CD8-positive, alpha-beta T cell (primary cell): ENCODE measurements at regions of chr1 and their contacts with region 1.

Region 1: GRCh38 chr1:219010720-219011119 is 163.0 kb upstream of the LYPLAL1 start:
- DNase-seq: no peak
- ATAC-seq: no peak
- H3K4me3 ChIP-seq: no peak overlapping the region
- H3K4me3 Mint-ChIP-seq: no peak overlapping the region
- H3K27ac ChIP-seq: no peak overlapping the region
- H3K27ac Mint-ChIP-seq: no peak overlapping the region
- H3K4me1 ChIP-seq: no peaks in the 10 kb centered on the region
- H3K4me1 Mint-ChIP-seq: no peaks in the 10 kb centered on the region
- H3K27me3 ChIP-seq: no peaks in the 10 kb centered on the region
- H3K27me3 Mint-ChIP-seq: peaks cover 2% of the 10 kb centered on the region
- CTCF ChIP-seq: no peak

Region 2: GRCh38 chr1:218546309-218546708 is 464.4 kb before region 1 on chr1:
- CTCF ChIA-PET with region 1: no interaction called
- POLR2A ChIA-PET with region 1: no interaction called
- intact Hi-C with region 1: loop called in 1 of 2 experiments (anchors 5 kb)
- DNase-seq: no peak
- ATAC-seq: no peak
- H3K4me3 ChIP-seq: no peak overlapping the region
- H3K4me3 Mint-ChIP-seq: no peak overlapping the region
- H3K27ac ChIP-seq: no peak overlapping the region
- H3K27ac Mint-ChIP-seq: no peak overlapping the region
- H3K4me1 ChIP-seq: no peaks in the 10 kb centered on the region
- H3K4me1 Mint-ChIP-seq: no peaks in the 10 kb centered on the region
- H3K27me3 ChIP-seq: no peaks in the 10 kb centered on the region
- H3K27me3 Mint-ChIP-seq: no peaks in the 10 kb centered on the region
- CTCF ChIP-seq: no peak

Region 3: GRCh38 chr1:219049501-219049900 is 38.8 kb after region 1 on chr1:
- CTCF ChIA-PET with region 1: no interaction called
- POLR2A ChIA-PET with region 1: no interaction called
- intact Hi-C with region 1: no loop called
- DNase-seq: no peak
- ATAC-seq: no peak
- H3K4me3 ChIP-seq: no peak overlapping the region
- H3K4me3 Mint-ChIP-seq: no peak overlapping the region
- H3K27ac ChIP-seq: no peak overlapping the region
- H3K27ac Mint-ChIP-seq: no peak overlapping the region
- H3K4me1 ChIP-seq: no peaks in the 10 kb centered on the region
- H3K4me1 Mint-ChIP-seq: no peaks in the 10 kb centered on the region
- H3K27me3 ChIP-seq: no peaks in the 10 kb centered on the region
- H3K27me3 Mint-ChIP-seq: no peaks in the 10 kb centered on the region
- CTCF ChIP-seq: no peak

Region 4: DNA sequence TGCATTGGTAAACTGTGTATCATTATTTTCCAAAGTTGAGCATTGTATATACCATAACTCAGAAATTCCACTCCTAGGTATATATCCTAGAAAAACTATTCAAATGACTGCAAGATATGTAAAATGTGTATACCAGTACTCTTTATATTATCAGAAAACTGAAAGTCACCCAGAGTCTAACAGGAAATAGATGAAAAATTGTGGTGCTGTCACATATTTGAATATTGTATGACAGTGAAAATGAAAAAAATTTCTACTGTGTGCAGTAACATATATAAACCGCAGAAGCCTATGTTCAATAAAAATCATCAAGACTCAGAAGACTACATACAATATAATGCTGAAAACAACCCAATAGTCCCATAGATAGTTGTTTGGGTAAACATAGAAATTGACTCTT is 88.6 kb after region 1 on chr1:
- CTCF ChIA-PET with region 1: no interaction called
- POLR2A ChIA-PET with region 1: no interaction called
- intact Hi-C with region 1: no loop called
- DNase-seq: no peak
- ATAC-seq: no peak
- H3K4me3 ChIP-seq: no peak overlapping the region
- H3K4me3 Mint-ChIP-seq: no peak overlapping the region
- H3K27ac ChIP-seq: no peak overlapping the region
- H3K27ac Mint-ChIP-seq: no peak overlapping the region
- H3K4me1 ChIP-seq: no peaks in the 10 kb centered on the region
- H3K4me1 Mint-ChIP-seq: no peaks in the 10 kb centered on the region
- H3K27me3 ChIP-seq: no peaks in the 10 kb centered on the region
- H3K27me3 Mint-ChIP-seq: no peaks in the 10 kb centered on the region
- CTCF ChIP-seq: no peak

Region 5: GRCh38 chr1:219298571-219299148 is 287.9 kb after region 1 on chr1:
- CTCF ChIA-PET with region 1: no interaction called
- POLR2A ChIA-PET with region 1: no interaction called
- intact Hi-C with region 1: no loop called
- DNase-seq: no peak
- ATAC-seq: no peak
- H3K4me3 ChIP-seq: no peak overlapping the region
- H3K4me3 Mint-ChIP-seq: no peak overlapping the region
- H3K27ac ChIP-seq: no peak overlapping the region
- H3K27ac Mint-ChIP-seq: no peak overlapping the region
- H3K4me1 ChIP-seq: no peaks in the 10 kb centered on the region
- H3K4me1 Mint-ChIP-seq: no peaks in the 10 kb centered on the region
- H3K27me3 ChIP-seq: no peaks in the 10 kb centered on the region
- H3K27me3 Mint-ChIP-seq: no peaks in the 10 kb centered on the region
- CTCF ChIP-seq: no peak